PC-3 (cell line): ENCODE measurements at regions of chrX and their contacts with region 1.

Region 1: GRCh38 chrX:23822397-23822796 is 39.4 kb downstream of the SAT1 start:
- DNase-seq: peak; percentile 69
- ATAC-seq: peak; percentile 93
- H3K4me3 ChIP-seq: no peak overlapping the region
- H3K27ac ChIP-seq: peak overlapping the region; percentile 98
- H3K4me1 ChIP-seq: peaks cover 27% of the 10 kb centered on the region
- H3K27me3 ChIP-seq: no peaks in the 10 kb centered on the region
- CTCF ChIP-seq: no peak

Region 2: GRCh38 chrX:23803931-23804381 is 18.4 kb before region 1 on chrX:
- CTCF ChIA-PET with region 1: no interaction called
- POLR2A ChIA-PET with region 1: no interaction called
- intact Hi-C with region 1: loop called (anchors 1 kb)
- DNase-seq: peak; percentile 83
- ATAC-seq: peak; percentile 52
- H3K4me3 ChIP-seq: peak overlapping the region; percentile 17
- H3K27ac ChIP-seq: peak overlapping the region; percentile 97
- H3K4me1 ChIP-seq: peaks cover 46% of the 10 kb centered on the region
- H3K27me3 ChIP-seq: no peaks in the 10 kb centered on the region
- CTCF ChIP-seq: no peak

Region 3: DNA sequence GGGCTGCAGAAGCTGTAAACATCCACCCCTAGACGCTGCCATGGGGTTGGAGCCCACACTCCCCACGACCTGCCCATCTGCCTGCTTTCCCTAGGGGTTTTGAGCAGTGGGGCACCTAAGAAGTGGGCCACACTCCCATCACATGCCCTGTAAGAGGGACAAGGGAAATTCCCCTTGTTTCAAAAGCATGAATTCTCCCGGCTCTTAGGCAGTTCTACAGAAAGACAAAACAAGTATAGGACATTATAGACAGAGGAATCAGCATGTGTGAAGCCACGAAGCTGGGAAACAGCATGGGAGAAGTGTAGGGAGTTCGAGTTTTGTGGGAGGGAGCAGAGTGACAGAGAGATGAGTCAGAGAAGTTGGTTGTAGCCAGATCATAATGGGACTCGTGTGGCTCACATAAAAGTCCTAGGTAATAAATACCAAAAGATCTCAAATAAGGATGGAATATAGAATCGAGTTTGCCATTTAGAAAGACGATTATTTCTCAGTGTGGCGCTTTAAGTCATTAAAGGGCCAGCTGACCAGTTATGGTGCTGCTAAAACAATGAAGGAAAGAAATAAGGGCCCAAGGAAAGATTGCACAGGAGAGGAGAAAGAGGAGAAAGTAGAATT is 61.4 kb after region 1 on chrX:
- CTCF ChIA-PET with region 1: no interaction called
- POLR2A ChIA-PET with region 1: interaction called, 3 read pairs
- intact Hi-C with region 1: loop called (anchors 5 kb)
- DNase-seq: peak; percentile 84
- ATAC-seq: peak; percentile 97
- H3K4me3 ChIP-seq: peak overlapping the region; percentile 42; the same call in 1 of the 2 replicates
- H3K27ac ChIP-seq: peak overlapping the region; percentile 96
- H3K4me1 ChIP-seq: peaks cover 27% of the 10 kb centered on the region
- H3K27me3 ChIP-seq: no peaks in the 10 kb centered on the region
- CTCF ChIP-seq: no peak